Sciatic nerve (tissue), 2 donors: ENCODE measurements at regions of chr5 and their contacts with region 1.

Region 1: DNA sequence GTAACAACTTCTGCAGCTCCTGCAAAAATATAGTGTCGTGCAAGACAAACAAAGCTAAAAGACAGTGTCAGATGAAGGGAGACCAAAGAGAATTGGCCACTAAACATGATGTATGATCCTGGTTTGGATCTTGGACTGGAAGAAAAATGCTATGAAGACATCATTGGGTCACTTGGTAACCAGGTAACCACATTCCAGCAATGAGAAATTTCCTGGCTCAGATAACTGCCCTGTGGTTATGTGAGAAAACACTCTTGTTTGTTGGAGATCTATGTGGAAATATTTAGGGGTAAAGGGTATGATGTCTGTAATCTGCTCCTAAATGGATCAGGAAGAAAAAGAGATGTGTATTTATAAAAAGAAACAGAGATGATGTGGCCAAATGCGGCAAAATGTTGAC is 45.5 kb upstream of the ANKRD33B start:
- DNase-seq: no peak
- ATAC-seq: peak; percentile 81

Region 2: DNA sequence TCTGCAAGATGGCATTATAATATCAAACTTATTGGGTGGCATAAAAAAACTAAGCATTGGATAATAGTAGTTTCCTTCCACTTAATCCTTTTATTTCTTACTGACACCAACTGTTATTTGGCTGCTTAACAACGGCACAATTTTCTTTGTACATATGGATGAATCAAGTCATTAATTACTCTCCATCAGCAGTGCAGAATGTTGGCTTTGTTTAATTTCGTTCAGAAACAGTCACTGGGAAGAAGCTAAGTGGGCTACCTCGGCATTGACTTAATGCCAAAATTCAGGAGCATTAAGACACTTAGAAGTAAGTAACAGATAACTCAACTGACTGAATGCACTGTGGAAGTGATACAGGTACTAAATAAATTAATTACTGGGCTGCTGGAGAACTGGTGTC is 925.5 kb after region 1 on chr5:
- intact Hi-C with region 1: loop called (anchors 5 kb)
- DNase-seq: no peak
- ATAC-seq: no peak